Breast epithelium (tissue), 4 donors: ENCODE measurements at regions of chr7 and their contacts with region 1.

Region 1: DNA sequence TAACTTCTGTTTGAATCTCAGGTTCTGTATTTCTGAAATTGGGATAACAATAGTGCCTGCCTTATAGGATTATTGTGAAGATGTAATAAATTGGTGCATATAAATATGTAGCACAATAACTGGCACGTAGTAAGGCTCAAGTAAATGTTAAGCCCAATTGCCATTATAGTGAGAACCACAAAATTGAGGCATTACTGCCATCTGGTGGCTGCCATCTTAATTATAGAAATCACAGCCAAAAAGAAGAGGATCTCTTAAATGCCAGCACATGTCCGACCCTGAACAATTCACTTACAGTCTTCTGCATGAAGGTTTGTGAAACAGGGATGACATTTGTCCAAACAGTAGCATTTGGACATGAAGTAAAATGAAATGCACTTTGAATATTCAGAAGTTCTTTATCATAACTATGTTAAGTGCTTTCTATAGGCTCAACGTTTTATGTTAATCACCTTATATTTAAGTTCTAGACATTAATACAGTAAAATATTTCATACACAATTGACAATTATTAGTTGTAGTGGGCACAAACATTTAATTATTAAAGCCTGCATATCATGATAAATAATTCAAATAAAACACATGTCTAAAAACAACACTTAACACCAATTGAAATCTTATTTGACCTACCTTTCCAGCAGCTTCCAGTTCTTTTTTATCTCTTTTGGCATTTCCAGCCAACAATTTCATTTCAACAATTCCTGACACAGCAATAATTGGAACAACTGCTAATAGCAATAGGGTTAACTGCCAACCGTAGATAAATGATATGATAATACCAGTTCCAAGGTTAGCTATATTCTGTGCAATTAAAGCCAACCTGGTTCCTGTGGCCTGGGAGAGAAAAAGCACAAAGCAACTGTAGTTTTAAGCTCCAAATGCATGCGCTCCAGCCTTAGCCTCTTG is 58.5 kb downstream of the ABCB4 start:
- DNase-seq: peak in 1 of 2 donors; percentile 30
- H3K4me3 ChIP-seq: no peak overlapping the region
- H3K27ac ChIP-seq: no peak overlapping the region
- H3K4me1 ChIP-seq: no peaks in the 10 kb centered on the region
- H3K27me3 ChIP-seq: no peaks in the 10 kb centered on the region
- CTCF ChIP-seq: peak in 2 of 3 donors; percentile 72 to 77
- POLR2A ChIP-seq: no peak

Region 2: DNA sequence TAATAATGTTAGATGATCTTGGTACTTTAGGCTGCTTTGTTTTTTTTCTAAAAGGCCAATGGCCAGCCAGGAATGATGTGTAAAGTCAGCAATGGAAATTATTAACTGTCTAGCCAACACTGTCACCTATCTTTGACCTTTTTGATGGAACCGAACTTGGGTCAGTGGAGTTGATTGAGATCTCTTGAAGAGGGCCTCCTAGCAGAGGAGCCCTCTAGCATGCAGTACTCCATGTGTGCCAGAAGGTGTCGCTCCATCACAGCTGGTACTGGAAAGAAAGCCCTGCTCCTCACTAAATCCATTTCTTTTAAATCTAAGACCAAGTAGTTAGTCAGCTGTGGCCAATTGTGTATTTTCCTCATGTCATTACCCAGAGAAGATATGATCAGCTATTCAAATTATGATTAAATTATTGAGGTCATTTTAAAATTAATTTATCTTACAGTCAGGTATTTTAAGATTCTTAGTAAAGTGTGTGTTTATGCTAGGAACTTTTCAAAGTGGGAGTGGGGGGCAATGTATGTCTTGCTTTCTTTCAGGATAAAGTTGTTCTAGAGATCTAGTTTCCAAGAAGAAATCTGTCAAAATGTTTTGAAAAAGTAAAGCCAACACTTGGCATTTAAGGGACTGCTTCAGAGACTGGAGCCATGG is 104.6 kb before region 1 on chr7:
- intact Hi-C with region 1: loop called (anchors 5 kb)
- DNase-seq: peak in 1 of 2 donors; percentile 29
- H3K4me3 ChIP-seq: no peak overlapping the region
- H3K27ac ChIP-seq: no peak overlapping the region
- H3K4me1 ChIP-seq: peaks cover 0 to 4% of the 10 kb centered on the region in 2 donors
- H3K27me3 ChIP-seq: no peaks in the 10 kb centered on the region
- CTCF ChIP-seq: peak; percentile 84 to 96 (median 92)
- POLR2A ChIP-seq: no peak

Region 3: GRCh38 chr7:87328281-87328680 is 88.7 kb before region 1 on chr7:
- intact Hi-C with region 1: no loop called
- DNase-seq: no peak
- H3K4me3 ChIP-seq: no peak overlapping the region
- H3K27ac ChIP-seq: no peak overlapping the region
- H3K4me1 ChIP-seq: no peaks in the 10 kb centered on the region
- H3K27me3 ChIP-seq: no peaks in the 10 kb centered on the region
- CTCF ChIP-seq: no peak
- POLR2A ChIP-seq: no peak

Region 4: DNA sequence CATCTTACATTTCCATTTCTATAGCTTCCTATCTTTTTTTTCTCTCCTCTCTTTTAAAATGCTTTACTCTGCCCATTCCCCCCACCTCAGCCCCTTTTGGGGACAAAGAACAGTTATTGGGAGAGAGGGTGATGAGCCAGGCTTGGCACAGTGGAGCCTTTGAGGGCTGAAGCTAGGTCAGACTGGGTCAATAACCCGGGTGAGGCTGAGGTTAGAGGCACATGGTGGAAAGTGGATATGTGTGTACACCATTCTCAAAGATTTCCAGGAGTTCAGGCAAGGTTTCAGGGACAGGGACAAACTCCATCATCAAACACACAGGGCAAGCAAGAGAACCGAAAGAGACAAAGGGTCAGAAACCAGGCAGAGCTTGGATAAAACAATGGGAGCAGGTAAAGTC is 47.0 kb after region 1 on chr7:
- intact Hi-C with region 1: loop called (anchors 2 kb)
- DNase-seq: no peak
- H3K4me3 ChIP-seq: no peak overlapping the region
- H3K27ac ChIP-seq: no peak overlapping the region
- H3K4me1 ChIP-seq: no peaks in the 10 kb centered on the region
- H3K27me3 ChIP-seq: no peaks in the 10 kb centered on the region
- CTCF ChIP-seq: no peak
- POLR2A ChIP-seq: no peak

Region 5: GRCh38 chr7:88985295-88985694 is 1568.4 kb after region 1 on chr7:
- intact Hi-C with region 1: no loop called
- DNase-seq: no peak
- H3K4me3 ChIP-seq: no peak overlapping the region
- H3K27ac ChIP-seq: no peak overlapping the region
- H3K4me1 ChIP-seq: no peaks in the 10 kb centered on the region
- H3K27me3 ChIP-seq: no peaks in the 10 kb centered on the region
- CTCF ChIP-seq: no peak
- POLR2A ChIP-seq: no peak

Region 6: DNA sequence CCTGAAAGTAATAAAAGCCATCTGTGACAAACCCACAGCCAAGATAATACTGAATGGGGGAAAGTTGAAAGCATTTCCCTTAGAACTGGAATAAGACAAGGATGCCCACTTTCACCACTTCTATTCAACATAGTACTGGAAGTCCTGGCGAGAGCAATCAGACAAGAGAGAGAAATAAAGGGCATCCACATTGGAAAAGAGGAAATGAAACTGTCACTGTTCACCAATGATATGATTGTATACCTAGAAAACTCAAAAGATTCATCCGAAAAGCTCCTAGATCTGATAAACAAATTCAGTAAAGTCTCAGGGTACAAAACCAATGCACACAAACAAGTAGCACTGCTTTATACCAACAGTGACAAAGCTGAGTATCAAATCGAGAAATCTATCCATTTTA is 1960.3 kb after region 1 on chr7:
- intact Hi-C with region 1: no loop called
- DNase-seq: no peak
- H3K4me3 ChIP-seq: no peak overlapping the region
- H3K27ac ChIP-seq: no peak overlapping the region
- H3K4me1 ChIP-seq: no peaks in the 10 kb centered on the region
- H3K27me3 ChIP-seq: no peaks in the 10 kb centered on the region
- CTCF ChIP-seq: no peak
- POLR2A ChIP-seq: no peak